ENCODE measurements at regions of chr10 and their contacts with region 1.

Region 1: GRCh38 chr10:14959276-14960057 is at the start of gene MEIG1:
- DNase-seq: peak; percentile 95
- H3K4me3 ChIP-seq: peak within 1 kb of the TSS; percentile 58
- H3K27ac ChIP-seq: peak within 1 kb of the TSS; percentile 93
- H3K4me1 ChIP-seq: peaks cover 10% of the 10 kb centered on the region
- H3K27me3 ChIP-seq: no peaks in the 10 kb centered on the region
- CTCF ChIP-seq: no peak
- total RNA-seq, gene MEIG1: 1.4 TPM in 1 of 2 replicates, not detected in the other

Region 2: GRCh38 chr10:14945091-14945490 is 14.4 kb before region 1 on chr10:
- CTCF ChIA-PET with region 1: interaction called, 14 read pairs
- POLR2A ChIA-PET with region 1: interaction called, 10 read pairs
- intact Hi-C with region 1: no loop called
- DNase-seq: no peak
- H3K4me3 ChIP-seq: no peak overlapping the region
- H3K27ac ChIP-seq: no peak overlapping the region
- H3K4me1 ChIP-seq: no peaks in the 10 kb centered on the region
- H3K27me3 ChIP-seq: no peaks in the 10 kb centered on the region
- CTCF ChIP-seq: no peak

Region 3: GRCh38 chr10:15147594-15148392 is 188.3 kb after region 1 on chr10:
- CTCF ChIA-PET with region 1: no interaction called
- POLR2A ChIA-PET with region 1: interaction called, 13 read pairs
- intact Hi-C with region 1: no loop called
- DNase-seq: no peak
- H3K4me3 ChIP-seq: no peak overlapping the region
- H3K27ac ChIP-seq: no peak overlapping the region
- H3K4me1 ChIP-seq: no peaks in the 10 kb centered on the region
- H3K27me3 ChIP-seq: no peaks in the 10 kb centered on the region
- CTCF ChIP-seq: no peak

Region 4: DNA sequence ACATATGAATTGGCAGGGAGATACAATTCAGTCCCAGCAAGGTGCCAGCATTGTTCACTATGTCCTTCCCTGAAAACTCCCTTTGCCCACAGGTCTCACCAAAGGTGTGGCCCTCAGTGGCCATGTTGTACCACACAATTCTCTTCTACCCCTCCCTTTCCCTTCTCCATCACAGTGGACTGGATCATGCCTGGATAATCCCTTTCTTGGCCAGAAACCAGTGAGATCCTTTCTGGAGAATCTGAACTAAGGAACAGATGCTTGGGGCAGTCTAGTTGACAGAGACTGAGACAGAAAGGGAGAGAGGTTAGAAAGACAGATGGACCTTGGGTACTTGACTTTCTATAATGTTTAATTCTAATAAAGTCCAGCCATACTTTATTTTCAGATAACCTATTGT is 199.5 kb after region 1 on chr10:
- CTCF ChIA-PET with region 1: no interaction called
- POLR2A ChIA-PET with region 1: no interaction called
- intact Hi-C with region 1: no loop called
- DNase-seq: no peak
- H3K4me3 ChIP-seq: no peak overlapping the region
- H3K27ac ChIP-seq: no peak overlapping the region
- H3K4me1 ChIP-seq: no peaks in the 10 kb centered on the region
- H3K27me3 ChIP-seq: no peaks in the 10 kb centered on the region
- CTCF ChIP-seq: no peak